Transverse colon (tissue), 4 donors: ENCODE measurements at regions of chr18 and their contacts with region 1.

Region 1: GRCh38 chr18:29749704-29750103 is 1292.8 kb downstream of the DSC3 start:
- DNase-seq: no peak
- H3K4me3 ChIP-seq: no peak overlapping the region
- H3K27ac ChIP-seq: no peak overlapping the region
- H3K4me1 ChIP-seq: no peaks in the 10 kb centered on the region
- H3K27me3 ChIP-seq: no peaks in the 10 kb centered on the region
- CTCF ChIP-seq: no peak
- EP300 ChIP-seq: no peak
- POLR2A ChIP-seq: no peak

Region 2: DNA sequence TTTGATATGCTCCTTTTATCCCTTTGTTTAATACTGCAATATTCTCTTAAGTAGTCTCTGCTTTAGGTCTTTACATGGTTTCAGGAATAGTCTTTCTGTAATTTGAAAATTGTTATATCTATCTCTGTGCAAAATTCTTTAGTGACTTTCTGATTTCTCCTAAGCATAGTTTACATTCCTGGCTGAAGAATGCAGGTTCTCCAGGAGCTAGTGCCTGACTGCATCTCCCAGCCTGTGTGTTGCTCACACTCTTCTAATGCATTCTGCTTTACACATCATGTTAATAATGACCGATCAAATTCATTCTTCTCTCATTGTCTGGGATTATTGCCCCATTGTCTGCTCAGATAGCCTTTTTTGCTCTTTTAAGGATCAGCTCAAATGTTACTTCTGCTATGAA is 56.4 kb before region 1 on chr18:
- in situ Hi-C with region 1: loop called in 1 of 4 experiments (anchors 10 kb)
- intact Hi-C with region 1: no loop called
- DNase-seq: no peak
- H3K4me3 ChIP-seq: no peak overlapping the region
- H3K27ac ChIP-seq: no peak overlapping the region
- H3K4me1 ChIP-seq: no peaks in the 10 kb centered on the region
- H3K27me3 ChIP-seq: no peaks in the 10 kb centered on the region
- CTCF ChIP-seq: no peak
- EP300 ChIP-seq: no peak
- POLR2A ChIP-seq: no peak

Region 3: GRCh38 chr18:29730073-29730472 is 19.6 kb before region 1 on chr18:
- in situ Hi-C with region 1: no loop called
- intact Hi-C with region 1: no loop called
- DNase-seq: no peak
- H3K4me3 ChIP-seq: no peak overlapping the region
- H3K27ac ChIP-seq: no peak overlapping the region
- H3K4me1 ChIP-seq: no peaks in the 10 kb centered on the region
- H3K27me3 ChIP-seq: no peaks in the 10 kb centered on the region
- CTCF ChIP-seq: no peak
- EP300 ChIP-seq: no peak
- POLR2A ChIP-seq: no peak

Region 4: DNA sequence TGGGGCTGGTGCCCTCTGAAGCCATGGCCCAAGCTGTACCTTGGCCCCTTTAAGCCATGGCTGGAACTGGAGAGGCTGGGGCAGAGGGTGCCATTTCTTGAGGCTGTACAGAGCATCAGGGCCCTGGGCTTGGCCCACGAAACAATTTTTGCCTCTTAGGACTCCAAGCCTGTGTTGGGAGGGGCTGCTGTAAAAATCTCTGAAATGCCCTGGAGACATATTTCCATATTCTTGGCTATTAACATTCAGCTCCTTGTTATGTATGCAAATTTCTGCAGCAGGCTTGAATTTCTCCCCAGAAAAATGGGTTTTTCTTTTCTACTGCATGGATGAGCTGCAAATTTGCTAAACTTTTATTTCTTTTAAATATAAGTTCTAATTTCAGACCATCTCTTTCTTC is 458.8 kb after region 1 on chr18:
- in situ Hi-C with region 1: no loop called
- intact Hi-C with region 1: loop called (anchors 5 kb)
- DNase-seq: no peak
- H3K4me3 ChIP-seq: no peak overlapping the region
- H3K27ac ChIP-seq: no peak overlapping the region
- H3K4me1 ChIP-seq: no peaks in the 10 kb centered on the region
- H3K27me3 ChIP-seq: no peaks in the 10 kb centered on the region
- CTCF ChIP-seq: no peak
- EP300 ChIP-seq: no peak
- POLR2A ChIP-seq: no peak